Activated T-helper 2 cell treated with anti-CD3 and anti-CD28 coated beads, Interferon-gamma antibody, Interleukin-2, Interleukin-4, amounts not matched to agents 10 μg/mL and 5 μg/mL and 100 μg/mL, durations not matched to agents 14 hours and 24 hours and 36 hours (primary cell): ENCODE measurements at regions of chr5 and their contacts with region 1.

Region 1: GRCh38 chr5:55994574-55995333 is at the start of gene IL6ST:
- DNase-seq: peak; percentile 93
- H3K4me3 Mint-ChIP-seq: peak within 1 kb of the TSS; percentile 95
- H3K27ac Mint-ChIP-seq: peak within 1 kb of the TSS; percentile 94
- H3K4me1 Mint-ChIP-seq: peaks cover 53% of the 10 kb centered on the region
- H3K27me3 Mint-ChIP-seq: no peaks in the 10 kb centered on the region
- total RNA-seq, gene IL6ST: 56.2 and 67.2 TPM in 2 replicates

Region 2: DNA sequence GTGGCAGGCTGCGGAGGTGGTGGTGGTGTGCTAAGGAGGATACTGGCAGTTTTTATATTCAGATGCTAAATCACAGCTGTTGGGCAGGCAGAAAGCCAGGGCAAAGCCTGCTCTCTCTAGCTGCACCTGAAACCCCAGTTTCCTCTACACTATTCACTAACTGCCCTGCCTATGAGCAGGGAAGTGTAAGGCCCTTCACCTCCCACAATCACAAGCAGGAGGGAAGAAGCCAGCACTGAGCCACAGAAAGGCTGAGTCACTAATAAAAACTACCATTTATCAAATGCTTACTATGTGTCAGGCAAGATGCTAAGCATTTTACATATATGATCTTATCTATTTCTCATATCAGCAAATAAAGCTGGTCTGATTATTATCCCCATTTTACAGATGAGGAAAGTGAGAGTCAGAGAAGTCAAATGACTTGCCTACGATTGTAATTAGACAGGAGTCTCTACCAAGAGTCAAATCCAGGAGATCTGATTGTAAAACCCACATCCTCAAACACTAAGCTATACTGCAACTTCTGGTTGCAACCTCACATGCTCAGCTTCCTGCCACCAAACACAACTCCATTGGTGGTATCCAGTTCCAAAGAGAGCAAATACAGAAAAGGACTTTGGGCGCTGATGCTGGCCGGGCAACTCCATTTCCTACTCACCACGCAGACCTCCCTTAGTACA is 17.7 kb after region 1 on chr5:
- intact Hi-C with region 1: loop called (anchors 1 kb)
- DNase-seq: peak; percentile 57
- H3K4me3 Mint-ChIP-seq: peak overlapping the region; percentile 19
- H3K27ac Mint-ChIP-seq: peak overlapping the region; percentile 86
- H3K4me1 Mint-ChIP-seq: peaks cover 29% of the 10 kb centered on the region
- H3K27me3 Mint-ChIP-seq: peaks cover 5% of the 10 kb centered on the region

Region 3: DNA sequence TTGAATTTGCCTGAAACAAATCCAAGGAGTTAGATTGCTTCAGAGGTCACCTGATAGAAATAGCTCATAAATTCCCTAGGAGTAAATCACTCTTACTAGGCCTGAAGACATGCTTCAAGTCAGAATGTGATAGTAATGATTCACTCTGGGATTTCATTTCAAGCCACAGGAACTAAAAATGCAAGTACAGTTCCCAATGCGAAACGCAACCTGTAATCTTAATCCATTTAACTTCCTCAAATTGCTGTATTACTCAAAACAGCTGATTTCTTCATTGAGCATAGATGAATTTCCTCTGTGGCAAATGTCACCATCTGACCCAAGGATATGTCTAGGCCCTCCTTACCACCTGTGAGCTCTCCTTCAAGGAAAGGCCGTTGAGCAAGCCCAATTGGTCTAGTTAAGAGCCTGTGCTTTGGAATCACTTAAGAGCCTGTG is 32.1 kb after region 1 on chr5:
- intact Hi-C with region 1: loop called (anchors 1 kb)
- DNase-seq: no peak
- H3K4me3 Mint-ChIP-seq: no peak overlapping the region
- H3K27ac Mint-ChIP-seq: no peak overlapping the region
- H3K4me1 Mint-ChIP-seq: peaks cover 22% of the 10 kb centered on the region
- H3K27me3 Mint-ChIP-seq: peaks cover 39% of the 10 kb centered on the region

Region 4: DNA sequence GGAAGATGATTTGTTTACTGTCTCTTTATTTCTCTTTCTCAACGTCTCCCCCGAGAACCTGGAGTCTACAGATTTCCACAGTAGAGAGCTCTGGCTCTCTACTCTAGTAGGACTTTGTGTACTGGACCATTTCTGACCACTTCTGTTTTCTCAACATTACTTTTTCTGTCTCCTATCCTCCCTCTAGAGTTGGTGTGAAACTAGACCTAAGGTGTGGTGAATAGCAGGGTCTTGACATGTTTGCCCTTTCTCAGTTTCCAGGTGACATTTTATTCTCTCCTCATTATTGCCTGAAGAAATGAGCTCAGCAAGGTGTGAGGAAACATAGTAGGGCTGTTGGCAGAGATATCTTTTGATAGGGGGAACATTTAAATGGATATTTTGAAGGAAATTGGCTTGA is 62.1 kb after region 1 on chr5:
- intact Hi-C with region 1: loop called (anchors 1 kb)
- DNase-seq: no peak
- H3K4me3 Mint-ChIP-seq: no peak overlapping the region
- H3K27ac Mint-ChIP-seq: no peak overlapping the region
- H3K4me1 Mint-ChIP-seq: peaks cover 45% of the 10 kb centered on the region
- H3K27me3 Mint-ChIP-seq: peaks cover 26% of the 10 kb centered on the region

Region 5: DNA sequence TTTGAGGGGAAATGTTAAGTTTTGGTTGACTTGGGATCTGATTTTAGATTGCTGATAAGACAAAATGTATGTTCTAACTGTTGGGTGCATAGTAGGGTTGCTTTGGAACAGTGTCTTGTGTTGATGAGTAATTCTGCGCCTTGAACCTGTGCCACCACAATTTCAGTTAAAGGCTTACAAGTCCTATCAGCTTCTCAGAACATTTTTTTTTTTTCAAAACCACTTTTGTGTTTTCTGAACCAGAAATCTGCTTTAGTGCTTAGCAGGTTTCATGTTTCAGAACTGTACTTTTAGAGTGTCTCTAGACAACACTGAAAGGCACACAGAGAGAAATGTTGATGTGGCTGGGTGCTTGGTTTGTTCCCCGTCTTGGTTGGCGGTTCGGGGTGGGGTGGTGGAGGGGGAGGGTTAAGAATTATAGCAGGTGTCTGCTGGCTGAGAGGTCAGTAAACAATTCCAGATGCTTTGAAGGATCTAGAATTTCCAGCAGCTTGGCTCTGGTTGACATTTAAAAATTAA is 153.8 kb after region 1 on chr5:
- intact Hi-C with region 1: loop called (anchors 2 kb)
- DNase-seq: peak; percentile 59
- H3K4me3 Mint-ChIP-seq: no peak overlapping the region
- H3K27ac Mint-ChIP-seq: peak overlapping the region; percentile 54
- H3K4me1 Mint-ChIP-seq: peaks cover 54% of the 10 kb centered on the region
- H3K27me3 Mint-ChIP-seq: no peaks in the 10 kb centered on the region